GM12878 (cell line): ENCODE measurements at regions of chr5 and their contacts with region 1.

Region 1: GRCh38 chr5:151659001-151659754 is 27.5 kb downstream of the SPARC start:
- DNase-seq: peak; percentile 39
- ATAC-seq: peak; percentile 83
- H3K4me3 ChIP-seq: no peak overlapping the region
- H3K27ac ChIP-seq: no peak overlapping the region
- H3K4me1 ChIP-seq: peaks cover 35% of the 10 kb centered on the region
- H3K27me3 ChIP-seq: no peaks in the 10 kb centered on the region; a peak in 1 of 4 replicates
- CTCF ChIP-seq: peak; percentile 81 to 98 (median 82)
- EP300 ChIP-seq: no peak
- POLR2A ChIP-seq: no peak
- RAD21 ChIP-seq: peak; percentile 96

Region 2: DNA sequence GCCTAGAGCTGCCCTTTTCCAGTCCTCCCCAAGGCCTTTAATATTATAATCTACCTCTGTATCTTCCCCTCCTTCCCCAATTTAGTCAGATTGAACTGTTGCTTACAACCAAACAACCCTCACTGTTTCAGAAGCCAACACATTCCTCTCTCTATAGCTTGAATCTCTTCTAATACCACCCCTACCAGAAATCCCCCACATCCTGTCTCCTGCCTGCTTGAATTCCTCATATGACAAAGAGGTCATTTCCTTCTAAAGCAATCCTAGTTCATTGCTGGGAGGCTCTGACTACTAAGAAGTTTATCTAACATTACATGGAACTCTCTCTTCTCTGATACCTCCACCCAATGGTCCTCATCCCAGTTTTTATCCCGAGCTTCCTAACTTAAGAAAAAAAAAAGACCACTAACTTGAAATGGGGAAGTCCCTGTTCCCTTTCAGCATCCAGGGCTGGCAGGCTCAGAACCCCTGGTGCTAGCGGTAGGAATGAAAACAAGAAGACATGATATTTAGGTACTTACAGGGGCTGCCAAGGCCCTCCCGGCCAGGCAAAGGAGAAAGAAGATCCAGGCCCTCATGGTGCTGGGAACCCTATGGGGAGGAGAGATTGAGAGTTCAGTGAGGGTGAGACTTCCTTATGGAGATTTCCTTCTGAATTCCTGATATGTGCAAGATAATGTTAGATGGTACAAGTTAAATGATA is 16.6 kb after region 1 on chr5:
- CTCF ChIA-PET with region 1: interaction called, 6 read pairs
- POLR2A ChIA-PET with region 1: interaction called, 7 read pairs
- RAD21 ChIA-PET with region 1: interaction called, 11 read pairs
- SMC1A ChIA-PET with region 1: interaction called, 8 read pairs
- in situ Hi-C with region 1: no loop called
- intact Hi-C with region 1: no loop called
- DNase-seq: no peak
- ATAC-seq: peak; percentile 79
- H3K4me3 ChIP-seq: no peak overlapping the region
- H3K27ac ChIP-seq: peak overlapping the region; percentile 65
- H3K4me1 ChIP-seq: peaks cover 27% of the 10 kb centered on the region
- H3K27me3 ChIP-seq: no peaks in the 10 kb centered on the region
- CTCF ChIP-seq: no peak
- EP300 ChIP-seq: no peak
- POLR2A ChIP-seq: no peak
- RAD21 ChIP-seq: no peak

Region 3: DNA sequence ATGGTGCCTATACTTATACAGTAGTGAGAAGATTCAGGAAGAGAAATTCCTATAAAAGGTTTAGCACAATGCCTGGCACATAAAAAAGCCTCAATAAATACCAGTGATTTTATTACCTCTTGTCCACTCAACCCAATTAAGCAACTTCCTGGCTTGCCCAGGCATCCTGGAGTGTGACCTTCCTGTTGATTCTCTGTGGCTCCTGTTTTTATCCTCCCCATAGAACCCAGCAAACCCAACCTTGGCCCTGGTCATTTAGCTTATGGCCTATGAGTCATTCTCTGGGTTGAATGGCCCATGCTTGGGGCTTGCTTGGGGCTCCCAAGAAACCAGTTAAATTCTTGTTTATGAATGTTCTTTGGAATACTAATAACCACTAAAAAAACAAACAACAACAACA is 48.9 kb after region 1 on chr5:
- CTCF ChIA-PET with region 1: interaction called, 16 read pairs
- POLR2A ChIA-PET with region 1: no interaction called
- RAD21 ChIA-PET with region 1: interaction called, 10 read pairs
- SMC1A ChIA-PET with region 1: interaction called, 16 read pairs
- in situ Hi-C with region 1: no loop called
- intact Hi-C with region 1: loop called (anchors 2 kb)
- DNase-seq: no peak
- ATAC-seq: no peak
- H3K4me3 ChIP-seq: no peak overlapping the region
- H3K27ac ChIP-seq: no peak overlapping the region
- H3K4me1 ChIP-seq: peaks cover 16% of the 10 kb centered on the region
- H3K27me3 ChIP-seq: no peaks in the 10 kb centered on the region
- CTCF ChIP-seq: no peak
- EP300 ChIP-seq: no peak
- POLR2A ChIP-seq: no peak
- RAD21 ChIP-seq: no peak

Region 4: GRCh38 chr5:151751091-151751490 is 91.9 kb after region 1 on chr5:
- CTCF ChIA-PET with region 1: interaction called, 381 read pairs
- POLR2A ChIA-PET with region 1: interaction called, 16 read pairs
- RAD21 ChIA-PET with region 1: interaction called, 207 read pairs
- SMC1A ChIA-PET with region 1: interaction called, 14 read pairs
- in situ Hi-C with region 1: no loop called
- intact Hi-C with region 1: no loop called
- DNase-seq: no peak
- ATAC-seq: no peak
- H3K4me3 ChIP-seq: no peak overlapping the region
- H3K27ac ChIP-seq: no peak overlapping the region
- H3K4me1 ChIP-seq: peaks cover 29% of the 10 kb centered on the region
- H3K27me3 ChIP-seq: no peaks in the 10 kb centered on the region
- CTCF ChIP-seq: no peak
- EP300 ChIP-seq: no peak
- POLR2A ChIP-seq: no peak
- RAD21 ChIP-seq: no peak

Region 5: DNA sequence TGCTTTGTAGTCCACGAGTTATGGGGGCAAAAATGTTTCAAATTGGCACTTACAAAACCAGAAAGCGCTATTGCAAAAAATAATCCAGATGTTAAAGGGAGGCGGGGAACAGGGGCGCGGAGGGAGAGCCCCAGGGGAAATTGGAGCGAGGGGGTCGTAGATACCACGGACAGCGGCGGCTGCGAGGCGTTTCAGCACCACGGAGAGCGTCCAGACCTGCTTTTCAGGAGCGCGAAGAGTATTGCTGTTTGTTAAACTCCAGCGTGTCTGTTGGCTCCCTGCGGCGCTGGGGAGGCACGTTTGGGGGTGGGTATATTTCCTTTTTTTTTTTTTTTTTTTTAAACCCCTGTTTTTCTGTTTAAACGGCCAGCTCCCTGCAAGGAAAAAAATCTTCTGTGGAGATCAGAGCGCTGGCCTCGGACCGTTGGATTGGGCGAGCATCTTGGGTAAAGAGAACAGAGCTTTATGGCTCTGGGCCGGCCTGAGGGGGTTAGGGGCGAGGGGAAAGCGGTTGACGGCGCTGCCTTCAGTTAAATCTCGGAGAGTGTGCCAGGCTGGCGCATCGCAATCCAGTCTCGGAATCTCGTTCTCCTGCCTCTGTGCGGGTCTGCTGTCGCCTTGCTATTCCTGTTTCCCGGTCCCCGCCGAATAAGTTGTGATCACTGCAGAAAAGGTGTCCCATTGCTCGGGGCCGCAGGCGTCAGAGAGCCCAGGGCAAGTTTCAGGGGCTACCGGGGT is 265.6 kb after region 1 on chr5 and contains the start of gene GLRA1:
- CTCF ChIA-PET with region 1: no interaction called
- POLR2A ChIA-PET with region 1: no interaction called
- RAD21 ChIA-PET with region 1: no interaction called
- SMC1A ChIA-PET with region 1: no interaction called
- in situ Hi-C with region 1: no loop called
- intact Hi-C with region 1: no loop called
- DNase-seq: no peak
- ATAC-seq: peak; percentile 54; the same call in 2 of the 3 replicates
- H3K4me3 ChIP-seq: no peak within 1 kb of the TSS
- H3K27ac ChIP-seq: no peak within 1 kb of the TSS
- H3K4me1 ChIP-seq: no peaks in the 10 kb centered on the region
- H3K27me3 ChIP-seq: no peaks in the 10 kb centered on the region
- CTCF ChIP-seq: no peak
- EP300 ChIP-seq: no peak
- POLR2A ChIP-seq: no peak
- RAD21 ChIP-seq: no peak
- polyA plus RNA-seq, gene GLRA1: not detected

Region 6: GRCh38 chr5:152142840-152143469 is 483.8 kb after region 1 on chr5:
- CTCF ChIA-PET with region 1: interaction called, 3 read pairs
- POLR2A ChIA-PET with region 1: no interaction called
- RAD21 ChIA-PET with region 1: interaction called, 9 read pairs
- SMC1A ChIA-PET with region 1: interaction called, 4 read pairs
- in situ Hi-C with region 1: no loop called
- intact Hi-C with region 1: loop called (anchors 10 kb)
- DNase-seq: peak; percentile 3
- ATAC-seq: peak; percentile 96
- H3K4me3 ChIP-seq: no peak overlapping the region
- H3K27ac ChIP-seq: no peak overlapping the region
- H3K4me1 ChIP-seq: no peaks in the 10 kb centered on the region
- H3K27me3 ChIP-seq: no peaks in the 10 kb centered on the region; a peak in 1 of 4 replicates
- CTCF ChIP-seq: peak; percentile 90 to 92 (median 90)
- EP300 ChIP-seq: no peak
- POLR2A ChIP-seq: no peak
- RAD21 ChIP-seq: peak; percentile 86